ENCODE measurements at regions of chr2 and their contacts with region 1.

Region 1: DNA sequence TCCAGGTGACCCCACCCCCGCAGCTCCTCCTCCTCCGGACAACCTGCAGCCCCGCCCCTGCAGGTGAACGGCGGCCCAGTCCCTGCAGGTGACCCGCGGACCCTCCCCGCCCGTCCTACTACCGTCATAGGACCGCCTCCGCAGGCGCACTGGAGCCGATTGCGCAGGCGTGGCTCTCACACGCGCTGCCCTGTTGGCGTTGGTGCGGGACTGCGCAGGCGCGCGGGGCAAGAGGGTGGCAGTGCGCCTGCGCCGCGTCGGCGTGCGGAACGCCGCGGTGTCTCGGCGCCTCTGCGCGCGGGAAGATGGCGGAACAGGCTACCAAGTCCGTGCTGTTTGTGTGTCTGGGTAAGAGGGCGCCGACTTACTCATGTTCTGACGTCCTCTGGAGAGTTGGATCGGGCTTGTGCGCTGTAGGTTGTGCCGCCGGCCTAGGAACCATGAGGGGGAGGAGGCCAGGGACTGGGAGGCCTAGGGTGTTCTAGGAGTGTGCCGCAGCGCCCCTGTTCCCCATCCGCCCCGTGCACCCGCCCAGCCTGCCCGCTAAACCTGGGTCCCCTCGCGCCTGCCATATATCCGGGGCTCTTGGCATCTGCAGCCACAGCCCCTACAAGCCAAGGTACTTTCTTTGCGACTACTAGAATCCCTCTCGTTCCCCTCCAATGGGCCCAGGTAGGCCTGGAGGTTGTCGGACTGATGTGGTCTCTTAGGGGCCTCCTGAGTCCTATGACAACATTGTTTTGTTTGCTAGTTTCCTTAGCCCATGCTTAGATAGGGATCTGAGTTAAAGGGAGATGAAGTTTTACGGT is at the start of gene ACP1:
- DNase-seq: peak; percentile 89 to 99 (median 95)
- ATAC-seq: peak; percentile 77
- H3K4me3 ChIP-seq: peak within 1 kb of the TSS; percentile 84 to 95
- H3K4me3 Mint-ChIP-seq: peak within 1 kb of the TSS; percentile 92
- H3K27ac ChIP-seq: peak within 1 kb of the TSS; percentile 92 to 95
- H3K27ac Mint-ChIP-seq: peak within 1 kb of the TSS; percentile 98
- H3K4me1 ChIP-seq: peaks cover 24% of the 10 kb centered on the region
- H3K4me1 Mint-ChIP-seq: peaks cover 68% of the 10 kb centered on the region
- H3K27me3 ChIP-seq: no peaks in the 10 kb centered on the region
- H3K27me3 Mint-ChIP-seq: no peaks in the 10 kb centered on the region
- CTCF ChIP-seq: no peak
- total RNA-seq, gene ACP1: 94.1 to 103 TPM

Region 2: DNA sequence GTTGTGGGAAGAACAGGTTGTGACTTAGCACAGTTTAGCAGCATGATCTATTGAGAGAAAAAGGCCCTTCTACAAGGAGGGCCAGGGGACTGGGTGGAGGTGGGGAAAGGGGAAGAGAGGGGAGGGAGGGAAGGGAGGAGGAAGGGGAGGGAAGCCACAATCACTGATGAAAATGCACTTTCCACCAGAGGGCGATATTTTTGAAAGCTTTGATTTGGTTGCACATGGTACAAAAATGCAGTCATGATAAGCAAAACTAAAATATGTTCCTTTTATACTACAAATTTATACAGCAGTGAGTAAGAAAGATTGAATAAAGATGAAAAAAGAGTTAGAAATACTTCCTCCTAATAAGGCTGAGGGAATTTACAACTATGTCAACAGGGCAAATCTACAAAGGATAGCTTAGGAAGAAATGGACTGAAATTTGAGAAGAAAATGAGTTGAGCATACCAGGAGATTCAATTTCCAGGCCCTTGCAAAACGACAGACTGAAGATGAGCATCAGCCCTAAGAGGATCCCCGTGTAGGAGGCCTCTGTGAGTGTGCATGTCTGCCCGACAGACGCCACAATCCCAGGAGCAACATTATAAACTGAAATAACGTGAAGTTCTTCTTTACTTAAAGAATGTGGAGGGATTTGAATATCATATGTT is 18.2 kb before region 1 on chr2:
- CTCF ChIA-PET with region 1: interaction called, 5 read pairs
- POLR2A ChIA-PET with region 1: no interaction called
- intact Hi-C with region 1: loop called in 1 of 2 experiments (anchors 2 kb)
- DNase-seq: peak in 3 of 9 experiments; percentile 32 to 73 (median 63)
- ATAC-seq: peak; percentile 38
- H3K4me3 ChIP-seq: no peak overlapping the region
- H3K4me3 Mint-ChIP-seq: no peak overlapping the region
- H3K27ac ChIP-seq: no peak overlapping the region
- H3K27ac Mint-ChIP-seq: no peak overlapping the region
- H3K4me1 ChIP-seq: peaks cover 3% of the 10 kb centered on the region
- H3K4me1 Mint-ChIP-seq: peaks cover 6% of the 10 kb centered on the region
- H3K27me3 ChIP-seq: no peaks in the 10 kb centered on the region
- H3K27me3 Mint-ChIP-seq: no peaks in the 10 kb centered on the region
- CTCF ChIP-seq: peak; percentile 60

Region 3: DNA sequence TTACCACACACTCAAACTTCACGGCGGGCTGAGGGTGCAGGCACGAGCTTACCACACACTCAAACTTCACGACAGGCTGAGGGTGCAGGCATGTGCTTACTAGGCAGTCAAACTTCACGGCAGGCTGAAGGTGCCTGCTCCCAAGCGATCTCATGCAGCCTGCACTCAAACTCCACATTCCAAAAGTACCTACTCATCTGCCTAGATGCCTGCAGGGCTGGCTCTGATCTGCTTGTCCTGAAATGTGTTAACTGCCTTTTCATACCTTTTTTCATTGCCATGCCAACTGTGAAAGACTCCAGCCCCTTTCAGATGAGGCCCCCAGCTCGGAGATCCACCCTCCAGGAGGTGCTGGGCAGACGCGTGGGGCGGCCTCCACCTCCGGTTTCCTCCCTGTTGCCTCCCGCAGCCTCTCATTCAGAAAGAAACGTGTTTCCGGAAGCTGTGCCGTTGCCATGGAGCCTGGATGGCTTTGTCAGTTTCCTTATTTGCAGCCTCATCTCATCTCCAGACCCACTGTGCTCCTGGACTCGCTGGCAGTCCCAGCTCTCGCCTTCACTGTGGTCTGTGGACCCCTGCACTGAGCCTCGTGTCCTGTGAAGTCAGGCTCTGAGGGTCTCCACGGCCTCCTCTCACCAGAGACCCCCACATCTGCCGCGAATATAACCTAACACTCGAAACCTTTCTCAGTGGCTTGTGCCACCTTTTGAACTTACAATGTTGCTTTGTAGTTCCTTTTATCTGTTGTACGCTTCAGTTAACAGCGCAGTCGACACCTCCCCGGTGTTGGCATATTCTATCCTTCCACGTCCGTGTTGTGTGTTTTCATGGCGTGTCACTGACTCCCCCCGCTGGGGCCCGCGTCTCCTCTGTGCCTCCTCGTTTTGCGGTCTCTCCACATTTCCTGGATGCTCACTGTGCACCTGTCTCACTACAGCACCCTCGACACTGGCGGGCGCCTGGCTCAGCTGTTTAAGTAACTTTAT is 129.1 kb after region 1 on chr2:
- CTCF ChIA-PET with region 1: no interaction called
- POLR2A ChIA-PET with region 1: no interaction called
- intact Hi-C with region 1: loop called in 1 of 2 experiments (anchors 5 kb)
- DNase-seq: peak; percentile 31 to 85 (median 71)
- ATAC-seq: peak; percentile 82
- H3K4me3 ChIP-seq: peak overlapping the region; percentile 33 to 36
- H3K4me3 Mint-ChIP-seq: peak overlapping the region; percentile 88
- H3K27ac ChIP-seq: peak overlapping the region; percentile 28 to 69
- H3K27ac Mint-ChIP-seq: peak overlapping the region; percentile 96
- H3K4me1 ChIP-seq: peaks cover 24% of the 10 kb centered on the region
- H3K4me1 Mint-ChIP-seq: peaks cover 23% of the 10 kb centered on the region
- H3K27me3 ChIP-seq: no peaks in the 10 kb centered on the region
- H3K27me3 Mint-ChIP-seq: no peaks in the 10 kb centered on the region
- CTCF ChIP-seq: no peak

Region 4: DNA sequence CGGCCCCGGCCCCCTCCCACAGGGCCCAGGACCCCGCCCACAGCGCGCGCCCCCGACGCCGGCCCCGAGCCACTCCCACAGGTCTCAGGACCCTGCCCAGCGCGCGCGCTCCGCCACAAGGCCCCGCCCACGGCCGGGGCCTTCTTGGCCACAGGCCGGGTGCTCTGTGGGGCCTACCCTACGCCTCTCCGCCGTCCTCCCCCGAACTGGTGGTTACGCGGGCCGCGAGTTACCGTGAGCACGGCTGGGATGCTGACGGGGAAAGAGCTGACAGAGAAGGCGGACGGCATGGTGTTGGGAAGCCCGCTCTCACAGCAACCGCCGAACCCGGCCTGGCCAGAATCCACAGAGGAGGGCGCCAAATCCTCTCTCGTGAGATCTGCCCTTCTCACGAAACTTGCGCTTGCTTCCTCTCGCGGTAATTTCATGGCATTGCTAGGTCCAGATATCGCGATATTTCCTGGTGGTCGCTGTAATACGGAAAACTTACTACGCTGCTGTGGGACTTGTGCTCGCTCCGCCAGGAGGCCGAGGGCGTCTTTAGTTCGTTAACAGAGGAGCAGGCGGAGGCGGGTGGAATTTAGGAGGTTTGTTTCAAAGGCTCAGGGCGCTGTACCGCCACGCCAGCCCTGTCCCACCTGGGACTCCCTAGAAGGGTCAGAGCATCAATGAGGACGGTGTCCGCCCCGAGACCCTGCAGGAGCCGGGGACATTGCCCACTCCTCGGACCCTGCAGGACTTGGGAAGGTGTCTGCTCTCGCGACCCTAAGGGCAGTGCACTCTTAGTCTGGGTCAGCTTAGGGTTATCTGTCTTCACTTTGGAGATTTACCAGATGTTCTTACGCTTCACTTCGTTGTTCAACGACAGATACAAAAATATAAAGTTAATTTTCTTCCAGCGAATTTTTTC is 412.4 kb after region 1 on chr2 and contains the start of gene TMEM18:
- CTCF ChIA-PET with region 1: no interaction called
- POLR2A ChIA-PET with region 1: no interaction called
- intact Hi-C with region 1: loop called (anchors 1 kb)
- DNase-seq: peak in 7 of 9 experiments; percentile 80 to 99 (median 98)
- ATAC-seq: peak; percentile 82
- H3K4me3 ChIP-seq: peak within 1 kb of the TSS; percentile 90 to 95
- H3K4me3 Mint-ChIP-seq: peak within 1 kb of the TSS; percentile 95
- H3K27ac ChIP-seq: peak within 1 kb of the TSS; percentile 96 to 100
- H3K27ac Mint-ChIP-seq: peak within 1 kb of the TSS; percentile 99
- H3K4me1 ChIP-seq: peaks cover 19% of the 10 kb centered on the region
- H3K4me1 Mint-ChIP-seq: peaks cover 42% of the 10 kb centered on the region
- H3K27me3 ChIP-seq: no peaks in the 10 kb centered on the region
- H3K27me3 Mint-ChIP-seq: no peaks in the 10 kb centered on the region
- CTCF ChIP-seq: peak; percentile 38
- total RNA-seq, gene TMEM18: 30.7 to 33.6 TPM

Measured in CD8-positive, alpha-beta T cell (primary cell).